HEK293 (cell line): ENCODE measurements at regions of chr6 and their contacts with region 1.

Region 1: DNA sequence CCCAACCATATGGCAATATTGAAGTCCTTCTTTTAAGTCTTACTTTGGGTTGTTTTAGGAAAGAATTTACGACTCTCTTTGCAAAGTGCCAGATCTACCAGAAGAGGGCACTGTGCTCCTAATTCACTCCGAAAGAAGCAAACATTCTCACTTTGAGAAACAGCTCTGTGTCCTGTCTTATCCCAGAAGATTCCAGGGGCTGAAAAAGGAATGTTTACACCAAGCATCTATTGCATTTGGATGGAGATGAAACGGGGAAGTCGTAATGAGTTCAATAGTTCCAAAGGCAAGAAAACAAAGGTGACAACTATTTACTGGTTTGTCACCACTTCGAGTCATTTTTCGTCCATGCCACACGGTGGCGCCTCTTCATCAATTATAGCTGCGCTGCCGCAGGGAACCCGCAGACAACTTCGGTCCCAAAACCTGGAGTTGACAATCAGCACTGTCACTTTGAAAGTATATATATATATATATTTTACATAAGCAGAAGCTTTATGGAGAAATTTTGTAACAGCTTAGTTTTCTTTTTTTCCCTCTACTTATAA is 121.6 kb downstream of the MOXD1 start:
- H3K4me3 ChIP-seq: peak overlapping the region; percentile 46
- H3K27ac ChIP-seq: no peak overlapping the region
- H3K4me1 ChIP-seq: no peaks in the 10 kb centered on the region
- CTCF ChIP-seq: peak; percentile 85

Region 2: DNA sequence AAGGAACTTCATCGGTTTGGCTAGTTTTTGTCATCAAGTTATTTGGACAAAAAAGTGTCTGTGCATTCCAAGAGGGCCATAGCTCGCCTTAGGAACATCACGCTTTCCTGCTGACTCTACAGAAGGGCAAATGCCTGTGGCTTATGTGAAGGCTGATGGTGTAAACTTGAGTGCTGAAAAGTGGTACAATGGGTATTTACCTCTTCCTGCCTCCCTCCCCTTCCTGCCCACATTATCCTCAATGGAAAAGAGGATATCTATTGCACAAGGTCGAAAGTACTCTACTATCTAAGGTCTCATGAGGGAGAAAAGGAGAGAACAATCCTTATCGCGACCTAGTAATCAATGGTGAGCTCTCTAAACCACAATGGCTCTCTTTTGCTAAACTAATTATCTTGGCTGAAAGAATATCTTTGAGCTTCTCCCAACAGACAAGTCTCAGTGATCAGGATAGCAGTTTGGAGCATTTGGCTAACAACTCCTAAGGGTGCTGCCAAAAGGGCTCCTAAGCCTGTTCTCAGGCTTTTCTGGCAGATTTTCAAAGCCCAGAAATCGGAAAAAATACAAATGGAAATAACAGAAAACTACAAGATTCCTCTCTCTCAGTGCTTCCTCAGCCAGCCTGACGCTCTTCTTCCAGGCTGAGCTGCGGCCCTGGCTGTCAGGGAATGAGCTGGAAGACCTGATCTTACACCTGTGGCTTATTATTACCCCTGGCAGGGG is 514.4 kb before region 1 on chr6:
- CTCF ChIA-PET with region 1: no interaction called
- POLR2A ChIA-PET with region 1: no interaction called
- H3K4me3 ChIP-seq: no peak overlapping the region
- H3K27ac ChIP-seq: no peak overlapping the region
- H3K4me1 ChIP-seq: no peaks in the 10 kb centered on the region
- CTCF ChIP-seq: no peak

Region 3: DNA sequence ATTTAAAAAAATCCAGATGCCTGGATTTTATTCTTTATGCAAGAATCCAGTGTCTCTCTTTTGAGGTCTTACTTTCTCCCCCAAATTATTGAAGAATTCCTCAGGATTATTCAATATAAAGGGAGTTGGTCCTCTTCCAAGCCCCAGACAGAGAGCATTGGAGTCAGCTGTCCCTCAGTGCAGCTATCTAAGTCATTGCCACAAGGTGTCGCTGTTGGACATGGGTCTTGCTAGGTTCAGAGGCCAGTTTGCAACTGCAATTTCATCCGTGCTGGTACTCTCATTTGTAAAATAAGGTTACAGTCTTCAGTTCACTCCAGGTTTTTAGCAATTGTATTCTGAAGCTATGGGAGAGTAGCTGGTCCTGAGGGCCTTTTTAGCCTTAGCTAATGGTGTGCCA is 356.3 kb before region 1 on chr6:
- CTCF ChIA-PET with region 1: interaction called, 117 read pairs
- POLR2A ChIA-PET with region 1: no interaction called
- H3K4me3 ChIP-seq: no peak overlapping the region
- H3K27ac ChIP-seq: no peak overlapping the region
- H3K4me1 ChIP-seq: no peaks in the 10 kb centered on the region
- CTCF ChIP-seq: no peak

Region 4: GRCh38 chr6:132096245-132096644 is 183.4 kb before region 1 on chr6:
- CTCF ChIA-PET with region 1: no interaction called
- POLR2A ChIA-PET with region 1: no interaction called
- H3K4me3 ChIP-seq: no peak overlapping the region
- H3K27ac ChIP-seq: no peak overlapping the region
- H3K4me1 ChIP-seq: no peaks in the 10 kb centered on the region
- CTCF ChIP-seq: no peak

Region 5: DNA sequence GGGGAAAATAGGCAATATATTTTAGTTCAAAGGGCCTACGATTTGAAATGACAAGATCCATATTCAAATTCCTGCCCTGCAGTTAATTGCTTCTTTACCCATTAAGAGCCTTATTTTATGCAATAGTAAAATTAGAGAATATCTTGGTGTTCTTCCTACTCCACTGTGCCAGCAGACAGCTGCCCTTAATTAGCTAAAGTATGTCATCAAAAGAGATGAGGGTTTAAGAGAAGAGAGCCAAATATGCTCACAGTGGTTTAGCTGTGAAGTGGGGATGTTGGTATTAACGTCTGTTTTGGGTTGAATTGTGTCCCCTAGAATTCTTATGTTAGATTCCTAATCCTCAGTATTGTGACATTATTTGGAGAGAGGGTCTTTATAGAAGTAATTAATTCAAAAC is 26.5 kb before region 1 on chr6:
- CTCF ChIA-PET with region 1: interaction called, 55 read pairs
- POLR2A ChIA-PET with region 1: no interaction called
- H3K4me3 ChIP-seq: no peak overlapping the region
- H3K27ac ChIP-seq: no peak overlapping the region
- H3K4me1 ChIP-seq: no peaks in the 10 kb centered on the region
- CTCF ChIP-seq: no peak

Region 6: GRCh38 chr6:132391391-132392271 is 112.0 kb after region 1 on chr6:
- CTCF ChIA-PET with region 1: interaction called, 30 read pairs
- POLR2A ChIA-PET with region 1: no interaction called
- H3K4me3 ChIP-seq: no peak overlapping the region
- H3K27ac ChIP-seq: no peak overlapping the region
- H3K4me1 ChIP-seq: peaks cover 10% of the 10 kb centered on the region; the same call in 1 of the 2 replicates
- CTCF ChIP-seq: no peak

Region 7: GRCh38 chr6:132471788-132472187 is 192.1 kb after region 1 on chr6:
- CTCF ChIA-PET with region 1: interaction called, 30 read pairs
- POLR2A ChIA-PET with region 1: no interaction called
- H3K4me3 ChIP-seq: no peak overlapping the region
- H3K27ac ChIP-seq: no peak overlapping the region
- H3K4me1 ChIP-seq: peaks cover 4% of the 10 kb centered on the region; the same call in 1 of the 2 replicates
- CTCF ChIP-seq: no peak

Region 8: DNA sequence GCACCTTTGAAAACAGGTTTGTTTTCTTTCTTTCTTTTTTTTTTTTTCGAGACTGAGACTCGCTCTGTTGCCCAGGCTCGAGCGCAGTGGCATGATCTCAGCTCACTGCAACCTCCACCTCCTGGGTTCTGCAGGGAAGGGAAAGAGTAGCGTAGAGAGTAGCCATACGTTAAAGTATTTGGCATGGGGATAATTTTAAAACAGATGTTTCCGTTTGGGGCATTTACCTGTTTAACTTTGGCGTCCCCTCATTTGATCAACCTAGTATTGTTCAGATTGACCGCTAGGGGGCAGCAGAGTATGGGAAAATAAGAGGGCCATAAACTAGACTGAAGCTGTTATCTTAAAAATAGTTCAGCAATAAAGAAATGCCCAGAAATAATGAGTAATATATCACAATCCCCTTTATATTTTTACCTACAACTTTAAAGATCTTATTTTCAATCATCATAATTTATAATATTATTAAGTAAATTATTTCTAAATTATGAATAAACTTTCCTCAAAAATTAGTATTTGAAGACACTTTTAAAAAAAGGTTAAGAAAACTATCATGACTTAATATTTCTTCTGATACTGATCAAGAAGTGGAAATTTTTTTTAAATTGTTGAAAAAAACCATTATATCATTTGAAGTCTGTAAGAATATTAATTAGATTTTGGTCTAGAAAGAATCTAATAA is 250.8 kb after region 1 on chr6:
- CTCF ChIA-PET with region 1: interaction called, 15 read pairs
- POLR2A ChIA-PET with region 1: no interaction called
- H3K4me3 ChIP-seq: peak overlapping the region; percentile 25; the same call in 1 of the 2 replicates
- H3K27ac ChIP-seq: no peak overlapping the region
- H3K4me1 ChIP-seq: peaks cover 5% of the 10 kb centered on the region; the same call in 1 of the 2 replicates
- CTCF ChIP-seq: peak; percentile 56